GM13976 (cell line): ENCODE measurements at regions of chr3 and their contacts with region 1.

Region 1: GRCh38 chr3:40337136-40338108 is 27.9 kb downstream of the EIF1B start:
- DNase-seq: peak; percentile 41
- CTCF ChIP-seq: no peak

Region 2: DNA sequence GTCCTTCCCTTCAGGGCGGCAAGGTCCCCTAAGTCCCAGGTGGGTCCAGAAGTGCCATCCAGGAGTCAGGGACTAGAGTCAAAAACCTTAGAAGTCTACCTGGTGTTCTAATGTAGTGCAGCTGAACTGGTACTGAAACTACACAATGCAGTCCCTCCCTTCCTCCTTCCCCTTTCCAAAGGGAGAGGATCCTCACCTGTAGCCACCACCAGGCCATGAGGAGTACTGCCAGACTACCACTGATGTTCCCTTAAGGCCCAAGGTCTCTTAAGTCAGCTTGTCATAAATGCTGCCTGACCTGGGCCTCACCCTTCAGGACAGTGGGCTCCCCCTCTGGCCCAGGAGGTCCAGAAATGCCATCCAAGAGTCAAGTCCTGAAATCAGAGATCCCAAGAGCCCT is 1525.6 kb after region 1 on chr3:
- in situ Hi-C with region 1: loop called (anchors 25 kb)
- DNase-seq: no peak
- CTCF ChIP-seq: no peak